ENCODE measurements at regions of chr15 and their contacts with region 1.

Region 1: GRCh38 chr15:48645558-48646330 is at the start of gene FBN1:
- DNase-seq: peak; percentile 23 to 89
- H3K4me3 ChIP-seq: peak within 1 kb of the TSS; percentile 87 to 88
- H3K27ac ChIP-seq: peak within 1 kb of the TSS; percentile 96 to 97
- H3K4me1 ChIP-seq: peaks cover 0 to 11% of the 10 kb centered on the region in 2 donors
- H3K27me3 ChIP-seq: no peaks in the 10 kb centered on the region
- CTCF ChIP-seq: no peak
- total RNA-seq, gene FBN1: 164 TPM

Region 2: GRCh38 chr15:48352474-48353072 is 293.2 kb before region 1 on chr15:
- intact Hi-C with region 1: loop called (anchors 10 kb)
- DNase-seq: peak in 1 of 2 donors; percentile 79
- H3K4me3 ChIP-seq: no peak overlapping the region
- H3K27ac ChIP-seq: no peak overlapping the region
- H3K4me1 ChIP-seq: peaks cover 0 to 11% of the 10 kb centered on the region in 2 donors
- H3K27me3 ChIP-seq: no peaks in the 10 kb centered on the region
- CTCF ChIP-seq: peak; percentile 41 to 81 (median 73)

Region 3: GRCh38 chr15:48507416-48508065 is 138.2 kb before region 1 on chr15:
- intact Hi-C with region 1: loop called (anchors 2 kb)
- DNase-seq: no peak
- H3K4me3 ChIP-seq: no peak overlapping the region
- H3K27ac ChIP-seq: no peak overlapping the region
- H3K4me1 ChIP-seq: peaks cover 0 to 6% of the 10 kb centered on the region in 2 donors
- H3K27me3 ChIP-seq: no peaks in the 10 kb centered on the region
- CTCF ChIP-seq: peak; percentile 32 to 61 (median 54)

Region 4: GRCh38 chr15:48559285-48559684 is 86.5 kb before region 1 on chr15:
- intact Hi-C with region 1: loop called (anchors 5 kb)
- DNase-seq: peak in 1 of 2 donors; percentile 80
- H3K4me3 ChIP-seq: peak overlapping the region in 1 of 2 donors; percentile 4
- H3K27ac ChIP-seq: peak overlapping the region; percentile 75 to 76
- H3K4me1 ChIP-seq: peaks cover 3 to 43% of the 10 kb centered on the region in 2 donors
- H3K27me3 ChIP-seq: no peaks in the 10 kb centered on the region
- CTCF ChIP-seq: no peak

Region 5: GRCh38 chr15:48657950-48658591 is 12.3 kb after region 1 on chr15:
- intact Hi-C with region 1: no loop called
- DNase-seq: no peak
- H3K4me3 ChIP-seq: no peak overlapping the region
- H3K27ac ChIP-seq: no peak overlapping the region
- H3K4me1 ChIP-seq: no peaks in the 10 kb centered on the region
- H3K27me3 ChIP-seq: no peaks in the 10 kb centered on the region
- CTCF ChIP-seq: no peak

Region 6: DNA sequence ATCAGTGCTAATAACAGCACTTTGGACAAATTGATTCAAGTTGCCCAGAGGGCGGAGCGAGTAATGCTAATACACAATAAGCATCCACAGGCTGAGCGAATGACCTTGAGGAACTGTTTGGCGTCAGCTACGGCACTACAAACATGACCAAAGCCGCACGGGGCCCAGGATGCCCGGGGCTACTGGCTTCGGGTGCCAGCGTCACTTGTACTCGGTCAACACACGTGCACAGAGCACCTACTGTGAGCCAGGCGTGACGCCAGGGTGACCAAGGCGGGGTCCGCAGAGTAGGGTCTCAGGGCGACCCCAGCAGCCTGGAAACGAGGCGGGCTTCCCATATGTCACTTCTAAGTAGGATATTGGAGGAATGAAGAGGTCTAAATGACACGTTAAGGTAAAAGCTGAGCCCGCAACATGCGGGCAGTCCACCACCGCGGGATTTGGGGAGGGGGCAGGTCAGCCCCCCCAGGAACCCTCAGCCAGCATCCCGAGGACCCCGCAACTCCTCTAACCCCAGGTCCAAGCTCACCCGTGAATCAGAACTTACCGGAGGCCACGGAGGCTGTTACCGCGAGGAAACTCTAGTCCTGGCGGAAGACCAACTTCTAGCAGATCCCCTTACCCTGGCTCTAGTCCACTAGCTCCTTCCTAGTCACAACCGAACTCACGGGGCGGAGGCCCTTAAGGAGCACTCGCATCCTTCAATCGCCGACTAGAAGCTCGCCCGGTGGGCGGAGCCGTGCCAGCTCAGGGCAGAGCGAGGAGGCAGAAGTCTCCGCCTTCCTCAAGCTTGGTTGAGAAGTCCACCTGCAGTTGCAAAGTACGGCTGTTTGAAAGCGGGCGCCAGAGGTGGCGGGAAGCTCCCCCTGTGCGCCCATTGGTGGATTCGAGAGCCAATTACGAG is 164.9 kb after region 1 on chr15 and contains the start of gene CEP152:
- intact Hi-C with region 1: loop called (anchors 5 kb)
- DNase-seq: peak; percentile 97 to 99
- H3K4me3 ChIP-seq: peak within 1 kb of the TSS; percentile 65 to 96
- H3K27ac ChIP-seq: peak within 1 kb of the TSS in 1 of 2 donors; percentile 37
- H3K4me1 ChIP-seq: peaks cover 3% of the 10 kb centered on the region in 2 donors
- H3K27me3 ChIP-seq: no peaks in the 10 kb centered on the region
- CTCF ChIP-seq: no peak
- total RNA-seq, gene CEP152: 1.1 TPM

Region 7: DNA sequence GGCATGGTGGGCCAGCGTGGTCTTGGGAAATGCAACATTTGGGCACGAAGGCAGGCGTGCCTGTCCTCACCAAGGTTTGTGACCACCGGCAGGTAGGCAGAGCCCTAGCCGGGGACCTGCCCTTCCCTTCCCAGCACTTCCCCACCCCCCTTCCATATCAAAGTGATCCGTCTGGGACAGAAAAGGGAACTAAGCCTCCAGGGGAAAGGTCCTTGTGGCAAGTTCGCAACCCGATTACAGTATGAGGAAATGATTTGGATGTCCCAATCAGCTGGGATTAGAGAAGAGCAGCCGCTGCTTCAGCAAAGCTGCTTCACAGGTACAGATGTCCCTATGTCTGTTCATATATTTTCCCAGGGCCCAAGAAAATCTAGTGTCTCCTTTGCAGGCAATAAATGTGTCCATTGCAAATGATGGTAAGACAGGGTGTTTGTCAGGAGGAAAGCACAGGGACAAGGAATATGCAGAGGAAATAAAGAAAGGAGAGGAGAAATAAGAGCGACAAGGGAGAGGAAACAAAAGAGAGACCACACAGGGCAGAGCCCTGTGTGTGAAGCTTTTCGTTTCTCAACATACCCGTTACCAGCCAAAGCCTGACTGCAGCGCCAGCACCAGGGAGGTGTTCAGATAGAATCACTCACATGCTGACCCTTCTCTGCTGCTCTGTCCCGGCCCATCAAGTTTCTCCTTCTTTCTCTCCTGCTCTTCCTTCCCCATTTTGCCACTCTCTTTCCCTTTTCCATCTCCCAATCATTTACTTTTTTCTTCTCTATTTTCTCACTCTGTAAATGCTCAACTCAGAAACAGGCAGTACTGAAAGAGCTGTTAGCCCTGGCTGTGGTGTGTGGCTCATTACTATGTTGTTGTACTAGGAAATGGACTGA is 417.9 kb after region 1 on chr15:
- intact Hi-C with region 1: no loop called
- DNase-seq: no peak
- H3K4me3 ChIP-seq: no peak overlapping the region
- H3K27ac ChIP-seq: no peak overlapping the region
- H3K4me1 ChIP-seq: no peaks in the 10 kb centered on the region
- H3K27me3 ChIP-seq: no peaks in the 10 kb centered on the region
- CTCF ChIP-seq: no peak